IMR-90 (cell line): ENCODE measurements at regions of chr2 and their contacts with region 1.

Region 1: GRCh38 chr2:55862673-55863390 is 60.8 kb downstream of the EFEMP1 start:
- DNase-seq: peak; percentile 100
- ATAC-seq: peak; percentile 89
- H3K4me3 ChIP-seq: no peak overlapping the region
- H3K27ac ChIP-seq: peak overlapping the region; percentile 100
- H3K4me1 ChIP-seq: peaks cover 16% of the 10 kb centered on the region
- H3K27me3 ChIP-seq: no peaks in the 10 kb centered on the region
- CTCF ChIP-seq: no peak
- POLR2A ChIP-seq: peak; percentile 8; the same call in 1 of the 2 replicates
- RAD21 ChIP-seq: no peak

Region 2: GRCh38 chr2:55196506-55196905 is 666.3 kb before region 1 on chr2:
- CTCF ChIA-PET with region 1: no interaction called
- POLR2A ChIA-PET with region 1: no interaction called
- dilution Hi-C with region 1: no loop called
- in situ Hi-C with region 1: no loop called
- intact Hi-C with region 1: no loop called
- DNase-seq: no peak
- ATAC-seq: no peak
- H3K4me3 ChIP-seq: no peak overlapping the region
- H3K27ac ChIP-seq: no peak overlapping the region
- H3K4me1 ChIP-seq: no peaks in the 10 kb centered on the region
- H3K27me3 ChIP-seq: no peaks in the 10 kb centered on the region
- CTCF ChIP-seq: no peak
- POLR2A ChIP-seq: no peak
- RAD21 ChIP-seq: no peak

Region 3: GRCh38 chr2:55843096-55843993 is 19.5 kb before region 1 on chr2:
- CTCF ChIA-PET with region 1: no interaction called
- POLR2A ChIA-PET with region 1: no interaction called
- dilution Hi-C with region 1: no loop called
- in situ Hi-C with region 1: no loop called
- intact Hi-C with region 1: loop called (anchors 1 kb)
- DNase-seq: peak; percentile 99
- ATAC-seq: peak; percentile 85
- H3K4me3 ChIP-seq: no peak overlapping the region
- H3K27ac ChIP-seq: peak overlapping the region; percentile 71
- H3K4me1 ChIP-seq: peaks cover 24% of the 10 kb centered on the region
- H3K27me3 ChIP-seq: no peaks in the 10 kb centered on the region
- CTCF ChIP-seq: no peak
- POLR2A ChIP-seq: peak; percentile 70
- RAD21 ChIP-seq: no peak; the same call in 1 of the 2 replicates

Region 4: DNA sequence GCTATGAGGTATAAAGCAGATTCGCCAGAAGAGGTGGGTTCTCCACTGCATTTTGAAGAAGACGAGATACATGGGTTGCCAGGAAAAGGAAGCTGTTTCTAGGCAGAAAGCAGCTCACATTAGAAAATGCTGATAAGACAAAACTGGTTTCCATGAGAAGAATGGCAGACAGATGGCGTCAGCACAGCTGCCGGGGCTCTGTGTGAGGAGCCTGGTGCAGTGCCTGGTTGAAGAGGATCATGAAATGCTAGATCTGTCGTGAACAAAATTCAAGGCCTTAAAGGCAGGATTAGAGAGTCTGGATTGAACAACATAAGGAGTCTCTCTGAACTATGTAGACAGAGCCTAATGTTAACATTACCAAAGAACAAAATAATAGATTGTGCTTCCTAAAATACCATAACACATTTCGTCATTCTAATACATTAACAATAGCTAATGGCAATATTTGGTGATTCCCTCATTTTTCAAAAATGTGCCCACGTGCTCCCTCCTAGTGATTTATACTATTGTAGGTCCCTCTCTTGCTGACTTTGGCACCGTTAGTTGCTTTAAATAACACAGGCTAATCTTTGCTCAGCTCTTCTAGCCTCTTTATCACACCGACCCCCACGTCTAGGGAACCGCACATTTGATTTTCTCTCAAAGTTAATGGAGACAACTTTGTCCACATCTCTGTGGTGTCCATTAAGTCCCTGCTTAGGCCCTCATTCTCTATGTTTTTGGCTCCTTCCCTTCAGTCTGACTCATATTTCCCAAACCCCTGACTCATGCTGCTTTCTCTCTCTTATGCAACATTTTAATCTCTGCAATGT is 22.5 kb after region 1 on chr2:
- CTCF ChIA-PET with region 1: no interaction called
- POLR2A ChIA-PET with region 1: interaction called, 4 read pairs
- dilution Hi-C with region 1: no loop called
- in situ Hi-C with region 1: no loop called
- intact Hi-C with region 1: loop called (anchors 2 kb)
- DNase-seq: peak; percentile 96
- ATAC-seq: peak; percentile 71
- H3K4me3 ChIP-seq: no peak overlapping the region
- H3K27ac ChIP-seq: peak overlapping the region; percentile 100
- H3K4me1 ChIP-seq: peaks cover 31% of the 10 kb centered on the region
- H3K27me3 ChIP-seq: no peaks in the 10 kb centered on the region
- CTCF ChIP-seq: no peak
- POLR2A ChIP-seq: no peak
- RAD21 ChIP-seq: no peak

Region 5: DNA sequence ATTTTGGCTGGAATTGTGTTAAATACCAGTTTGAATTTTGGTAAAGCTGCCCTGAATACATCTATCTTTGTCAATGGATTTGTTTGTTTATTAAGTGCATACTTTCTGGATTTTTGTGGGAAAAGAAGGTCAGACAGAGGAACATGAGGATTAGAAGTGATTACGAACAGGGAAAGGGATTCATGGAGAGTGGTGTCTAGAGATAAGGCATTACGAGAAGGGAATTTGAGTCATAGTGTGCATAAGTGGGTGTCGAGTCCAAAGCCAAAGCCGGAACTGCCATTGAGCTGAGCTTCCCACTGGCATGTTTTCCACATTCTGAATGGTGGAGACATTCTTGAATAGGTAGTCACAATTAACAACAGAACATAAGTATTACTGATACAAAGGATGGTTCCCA is 129.6 kb after region 1 on chr2:
- CTCF ChIA-PET with region 1: no interaction called
- POLR2A ChIA-PET with region 1: no interaction called
- dilution Hi-C with region 1: no loop called
- in situ Hi-C with region 1: no loop called
- intact Hi-C with region 1: loop called (anchors 1 kb)
- DNase-seq: peak; percentile 100
- ATAC-seq: peak; percentile 94
- H3K4me3 ChIP-seq: no peak overlapping the region
- H3K27ac ChIP-seq: no peak overlapping the region
- H3K4me1 ChIP-seq: peaks cover 8% of the 10 kb centered on the region
- H3K27me3 ChIP-seq: no peaks in the 10 kb centered on the region
- CTCF ChIP-seq: no peak
- POLR2A ChIP-seq: no peak
- RAD21 ChIP-seq: no peak